ENCODE measurements at regions of chr1 and their contacts with region 1.

Region 1: GRCh38 chr1:182781841-182782586 is 7.6 kb upstream of the NPL start:
- DNase-seq: peak; percentile 51
- ATAC-seq: peak; percentile 88
- H3K4me3 ChIP-seq: no peak overlapping the region
- H3K27ac ChIP-seq: no peak overlapping the region
- H3K4me1 ChIP-seq: peaks cover 5% of the 10 kb centered on the region; the same call in 1 of the 2 replicates
- H3K27me3 ChIP-seq: no peaks in the 10 kb centered on the region
- CTCF ChIP-seq: peak; percentile 83 to 95 (median 89)
- EP300 ChIP-seq: no peak
- POLR2A ChIP-seq: no peak
- RAD21 ChIP-seq: peak; percentile 97

Region 2: GRCh38 chr1:182143154-182143657 is 638.8 kb before region 1 on chr1:
- CTCF ChIA-PET with region 1: interaction called, 28 read pairs
- POLR2A ChIA-PET with region 1: no interaction called
- RAD21 ChIA-PET with region 1: interaction called, 5 read pairs
- SMC1A ChIA-PET with region 1: interaction called, 6 read pairs
- in situ Hi-C with region 1: loop called (anchors 10 kb)
- intact Hi-C with region 1: no loop called
- DNase-seq: peak; percentile 27
- ATAC-seq: peak; percentile 73
- H3K4me3 ChIP-seq: no peak overlapping the region
- H3K27ac ChIP-seq: no peak overlapping the region
- H3K4me1 ChIP-seq: peaks cover 9% of the 10 kb centered on the region
- H3K27me3 ChIP-seq: no peaks in the 10 kb centered on the region
- CTCF ChIP-seq: peak; percentile 89 to 97 (median 91); a peak in 5 of 6 replicates
- EP300 ChIP-seq: no peak
- POLR2A ChIP-seq: no peak
- RAD21 ChIP-seq: peak; percentile 95

Region 3: GRCh38 chr1:182446033-182446669 is 335.9 kb before region 1 on chr1:
- CTCF ChIA-PET with region 1: interaction called, 35 read pairs
- POLR2A ChIA-PET with region 1: no interaction called
- RAD21 ChIA-PET with region 1: interaction called, 24 read pairs
- SMC1A ChIA-PET with region 1: interaction called, 15 read pairs
- in situ Hi-C with region 1: loop called (anchors 5 kb)
- intact Hi-C with region 1: loop called (anchors 1 kb)
- DNase-seq: peak; percentile 26
- ATAC-seq: peak; percentile 87
- H3K4me3 ChIP-seq: no peak overlapping the region
- H3K27ac ChIP-seq: no peak overlapping the region
- H3K4me1 ChIP-seq: peaks cover 15% of the 10 kb centered on the region
- H3K27me3 ChIP-seq: no peaks in the 10 kb centered on the region
- CTCF ChIP-seq: peak; percentile 60 to 80 (median 61)
- EP300 ChIP-seq: no peak
- POLR2A ChIP-seq: no peak
- RAD21 ChIP-seq: peak; percentile 90

Region 4: GRCh38 chr1:182622901-182623528 is 159.0 kb before region 1 on chr1:
- CTCF ChIA-PET with region 1: interaction called, 1,888 read pairs
- POLR2A ChIA-PET with region 1: interaction called, 3 read pairs
- RAD21 ChIA-PET with region 1: interaction called, 93 read pairs
- SMC1A ChIA-PET with region 1: interaction called, 31 read pairs
- in situ Hi-C with region 1: no loop called
- intact Hi-C with region 1: loop called (anchors 5 kb)
- DNase-seq: no peak
- ATAC-seq: peak; percentile 79
- H3K4me3 ChIP-seq: peak overlapping the region; percentile 42
- H3K27ac ChIP-seq: peak overlapping the region; percentile 29
- H3K4me1 ChIP-seq: peaks cover 59% of the 10 kb centered on the region
- H3K27me3 ChIP-seq: no peaks in the 10 kb centered on the region
- CTCF ChIP-seq: no peak
- EP300 ChIP-seq: peak in 1 of 2 experiments; percentile 60; a peak in 3 of 4 replicates
- POLR2A ChIP-seq: no peak
- RAD21 ChIP-seq: peak; percentile 20

Region 5: GRCh38 chr1:182662121-182662890 is 119.7 kb before region 1 on chr1:
- CTCF ChIA-PET with region 1: interaction called, 46 read pairs
- POLR2A ChIA-PET with region 1: no interaction called
- RAD21 ChIA-PET with region 1: interaction called, 5 read pairs
- SMC1A ChIA-PET with region 1: interaction called, 9 read pairs
- in situ Hi-C with region 1: no loop called
- intact Hi-C with region 1: no loop called
- DNase-seq: no peak
- ATAC-seq: no peak
- H3K4me3 ChIP-seq: no peak overlapping the region
- H3K27ac ChIP-seq: no peak overlapping the region
- H3K4me1 ChIP-seq: no peaks in the 10 kb centered on the region
- H3K27me3 ChIP-seq: no peaks in the 10 kb centered on the region
- CTCF ChIP-seq: no peak
- EP300 ChIP-seq: no peak
- POLR2A ChIP-seq: no peak
- RAD21 ChIP-seq: no peak

Region 6: GRCh38 chr1:182739545-182739944 is 42.5 kb before region 1 on chr1:
- CTCF ChIA-PET with region 1: interaction called, 14 read pairs
- POLR2A ChIA-PET with region 1: no interaction called
- RAD21 ChIA-PET with region 1: interaction called, 6 read pairs
- SMC1A ChIA-PET with region 1: interaction called, 7 read pairs
- in situ Hi-C with region 1: no loop called
- intact Hi-C with region 1: no loop called
- DNase-seq: no peak
- ATAC-seq: peak; percentile 98
- H3K4me3 ChIP-seq: no peak overlapping the region
- H3K27ac ChIP-seq: no peak overlapping the region
- H3K4me1 ChIP-seq: no peaks in the 10 kb centered on the region
- H3K27me3 ChIP-seq: no peaks in the 10 kb centered on the region; a peak in 1 of 4 replicates
- CTCF ChIP-seq: no peak
- EP300 ChIP-seq: peak in 1 of 2 experiments; percentile 21; a peak in 1 of 4 replicates
- POLR2A ChIP-seq: no peak
- RAD21 ChIP-seq: no peak